Posterior vena cava (tissue), 2 donors: ENCODE measurements at regions of chr9 and their contacts with region 1.

Region 1: DNA sequence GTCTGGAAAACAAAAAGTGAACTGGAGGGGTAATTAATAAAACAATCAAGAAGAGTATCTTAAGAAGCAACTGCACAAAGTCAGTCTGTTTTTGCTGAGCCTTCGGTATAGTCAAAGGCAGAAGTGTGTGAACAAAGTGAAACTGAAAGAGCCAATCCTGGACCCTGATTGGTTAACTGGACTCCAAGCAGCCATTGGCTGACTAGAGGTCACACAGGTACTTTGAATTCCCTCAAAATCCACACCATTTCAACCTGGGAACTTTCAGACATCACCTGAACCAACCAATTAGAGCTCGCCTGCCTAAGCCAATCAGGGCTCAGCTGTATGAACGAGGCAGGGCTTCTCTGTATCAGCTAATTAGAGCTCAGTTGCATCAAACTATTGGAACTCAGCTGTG is 286.7 kb downstream of the TLE4 start:
- DNase-seq: no peak

Region 2: GRCh38 chr9:78820855-78821822 is 1037.4 kb before region 1 on chr9:
- intact Hi-C with region 1: loop called in 1 of 2 experiments (anchors 10 kb)
- DNase-seq: no peak

Region 3: GRCh38 chr9:79902825-79903600 is 44.5 kb after region 1 on chr9:
- intact Hi-C with region 1: no loop called
- DNase-seq: no peak